ENCODE measurements at regions of chr7 and their contacts with region 1.

Region 1: DNA sequence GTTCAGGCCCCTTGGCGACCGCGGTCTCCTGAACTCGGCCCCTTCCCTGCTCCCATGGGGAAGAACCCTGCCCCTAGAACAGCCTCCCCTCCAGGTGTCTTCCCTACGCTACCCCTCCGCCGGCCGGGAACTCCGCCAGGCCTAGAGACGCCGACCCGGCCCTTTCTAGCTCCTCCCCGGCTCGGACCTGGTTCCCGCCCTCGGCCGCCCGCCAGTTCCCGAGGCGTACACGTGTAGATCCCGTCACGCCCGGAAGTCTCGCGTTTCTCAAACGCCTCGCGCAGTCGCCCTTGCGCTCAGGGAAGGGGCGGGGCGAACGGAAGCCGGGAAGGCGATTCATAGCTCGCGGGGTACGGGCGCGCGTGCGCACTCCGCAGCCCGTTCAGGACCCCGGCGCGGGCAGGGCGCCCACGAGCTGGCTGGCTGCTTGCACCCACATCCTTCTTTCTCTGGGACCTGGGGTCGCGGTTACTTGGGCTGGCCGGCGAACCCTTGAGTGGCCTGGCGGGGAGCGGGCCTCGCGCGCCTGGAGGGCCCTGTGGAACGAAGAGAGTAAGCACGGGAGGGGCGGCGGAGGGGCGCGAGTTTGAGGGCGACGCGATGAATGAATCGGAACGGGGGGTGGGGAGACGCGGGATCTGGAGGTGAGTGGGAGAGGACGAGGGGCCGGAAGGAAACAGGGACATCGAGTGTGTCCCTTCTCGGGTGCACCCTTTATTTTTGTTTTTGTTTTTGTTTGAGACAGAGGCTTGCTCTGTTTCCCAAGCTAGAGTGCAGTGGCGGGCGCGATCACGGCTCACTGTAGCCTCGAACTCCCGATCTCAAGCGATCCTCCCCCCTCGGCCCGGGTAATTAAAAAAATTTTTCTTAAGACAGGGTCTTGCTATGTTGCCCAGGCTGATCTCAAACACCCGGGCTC is at the start of gene POP7:
- DNase-seq: peak; percentile 91 to 99
- ATAC-seq: peak; percentile 95 to 96
- H3K4me3 ChIP-seq: peak within 1 kb of the TSS; percentile 76
- H3K27ac ChIP-seq: peak within 1 kb of the TSS; percentile 91 to 96
- H3K4me1 ChIP-seq: peaks cover 12% of the 10 kb centered on the region
- CTCF ChIP-seq: no peak
- EP300 ChIP-seq: no peak
- POLR2A ChIP-seq: peak; percentile 72
- RAD21 ChIP-seq: no peak
- polyA plus RNA-seq, gene POP7: 29.5 and 37.3 TPM in 2 replicates

Region 2: DNA sequence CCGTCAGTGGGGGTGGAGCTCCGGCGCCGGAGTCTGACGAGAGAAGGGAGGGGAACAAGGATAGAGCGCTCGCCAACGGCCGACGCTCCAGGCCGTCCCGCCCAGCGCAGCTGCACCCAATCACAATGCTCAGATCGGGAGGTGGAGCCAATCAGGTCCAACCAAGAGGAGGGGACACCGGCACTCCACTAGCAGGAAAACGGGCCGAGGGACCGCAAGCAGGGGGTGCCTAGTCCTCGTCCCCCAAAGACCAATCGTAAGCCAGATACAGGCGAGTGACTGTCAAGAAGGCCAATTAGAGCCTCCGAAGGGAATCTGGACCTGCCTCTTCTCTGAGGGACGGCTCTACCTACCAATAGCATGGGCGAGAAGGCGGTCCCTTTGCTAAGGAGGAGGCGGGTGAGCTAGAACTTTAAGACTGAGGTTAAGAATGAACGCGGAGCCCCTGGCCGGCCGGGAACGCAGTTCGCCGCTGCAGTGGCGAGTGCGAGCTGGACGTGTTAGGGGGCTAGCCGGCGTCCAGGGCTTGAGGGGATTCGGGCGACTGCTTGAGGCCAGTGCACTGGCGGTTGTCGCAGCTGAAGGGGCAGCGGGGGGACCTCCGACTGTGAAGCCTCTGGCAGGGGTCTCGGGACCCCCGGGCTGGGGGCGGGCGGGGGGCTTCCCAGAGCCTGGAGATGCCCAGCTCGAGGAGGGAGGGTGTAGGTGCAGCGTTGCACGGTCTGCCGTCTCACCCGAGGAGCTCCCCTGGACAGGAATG is 119.6 kb before region 1 on chr7 and contains the start of gene FBXO24:
- CTCF ChIA-PET with region 1: interaction called, 3 read pairs
- POLR2A ChIA-PET with region 1: interaction called, 10 read pairs
- DNase-seq: peak; percentile 100
- ATAC-seq: peak; percentile 88 to 95
- H3K4me3 ChIP-seq: peak within 1 kb of the TSS; percentile 99
- H3K27ac ChIP-seq: peak within 1 kb of the TSS; percentile 95 to 99
- H3K4me1 ChIP-seq: peaks cover 15% of the 10 kb centered on the region
- CTCF ChIP-seq: no peak
- EP300 ChIP-seq: no peak
- POLR2A ChIP-seq: peak; percentile 79
- RAD21 ChIP-seq: no peak
- polyA plus RNA-seq, gene FBXO24: 0.36 and 0.52 TPM in 2 replicates

Region 3: GRCh38 chr7:100632951-100633717 is 72.9 kb before region 1 on chr7:
- CTCF ChIA-PET with region 1: interaction called, 20 read pairs
- POLR2A ChIA-PET with region 1: interaction called, 15 read pairs
- DNase-seq: peak; percentile 79 to 90
- ATAC-seq: peak; percentile 88 to 93
- H3K4me3 ChIP-seq: peak overlapping the region; percentile 66
- H3K27ac ChIP-seq: peak overlapping the region; percentile 82 to 97
- H3K4me1 ChIP-seq: 0 out of 3 replicates have a peak, but pooled peaks cover 3% of the 10 kb centered on the region
- CTCF ChIP-seq: peak; percentile 43; the same call in 2 of the 3 replicates
- EP300 ChIP-seq: no peak
- POLR2A ChIP-seq: peak; percentile 62
- RAD21 ChIP-seq: peak; percentile 16 to 26; a peak in 1 of 5 replicates

Region 4: GRCh38 chr7:100719523-100720319 is 13.7 kb after region 1 on chr7:
- CTCF ChIA-PET with region 1: interaction called, 266 read pairs
- POLR2A ChIA-PET with region 1: interaction called, 6 read pairs
- DNase-seq: peak in 1 of 2 experiments; percentile 64
- ATAC-seq: peak; percentile 68 to 80
- H3K4me3 ChIP-seq: peak overlapping the region; percentile 40
- H3K27ac ChIP-seq: peak overlapping the region in 1 of 2 experiments; percentile 70; a peak in 1 of 6 replicates
- H3K4me1 ChIP-seq: peaks cover 11% of the 10 kb centered on the region; the same call in 2 of the 3 replicates
- CTCF ChIP-seq: peak; percentile 55
- EP300 ChIP-seq: no peak
- POLR2A ChIP-seq: no peak
- RAD21 ChIP-seq: peak; percentile 77 to 80

Region 5: GRCh38 chr7:100763556-100764140 is 57.6 kb after region 1 on chr7:
- CTCF ChIA-PET with region 1: interaction called, 10 read pairs
- POLR2A ChIA-PET with region 1: no interaction called
- DNase-seq: no peak
- ATAC-seq: no peak
- H3K4me3 ChIP-seq: no peak overlapping the region
- H3K27ac ChIP-seq: no peak overlapping the region
- H3K4me1 ChIP-seq: 0 out of 3 replicates have a peak, but pooled peaks cover 4% of the 10 kb centered on the region
- CTCF ChIP-seq: no peak
- EP300 ChIP-seq: no peak
- POLR2A ChIP-seq: no peak
- RAD21 ChIP-seq: no peak

Region 6: DNA sequence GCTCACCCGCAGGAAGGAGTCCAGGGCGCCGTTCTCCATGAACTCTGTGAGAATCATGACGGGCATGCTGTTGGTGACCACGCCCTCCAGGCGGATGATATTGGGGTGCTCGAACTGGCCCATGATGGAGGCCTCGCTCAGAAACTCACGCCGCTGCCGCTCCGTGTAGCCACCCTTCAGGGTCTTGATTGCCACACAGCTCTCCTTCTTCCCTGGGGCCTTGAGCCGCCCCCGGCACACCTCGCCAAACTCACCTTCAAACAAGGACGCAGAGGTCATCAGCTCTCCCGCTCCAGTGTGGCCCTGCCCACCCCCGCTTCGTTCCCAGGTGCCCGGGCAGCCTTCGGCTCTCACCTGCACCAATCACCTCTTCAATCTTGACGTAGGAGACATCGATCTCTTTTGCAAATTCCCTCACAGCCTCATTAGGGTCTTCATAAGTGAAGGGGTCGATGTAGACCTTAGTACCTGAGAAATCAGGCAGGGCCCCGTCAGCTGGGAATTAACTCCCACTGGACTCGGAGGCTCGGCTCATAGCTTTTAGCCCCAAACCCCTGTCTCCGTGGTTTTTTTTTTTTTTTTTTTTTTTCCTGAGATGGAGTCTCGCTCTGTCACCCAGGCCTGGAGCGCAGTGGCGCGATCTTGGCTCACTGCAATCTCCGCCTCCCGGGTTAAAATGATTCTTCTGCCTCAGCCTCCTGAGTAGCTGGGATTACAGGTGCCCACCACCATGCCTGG is 106.9 kb after region 1 on chr7:
- CTCF ChIA-PET with region 1: interaction called, 16 read pairs
- POLR2A ChIA-PET with region 1: no interaction called
- DNase-seq: no peak
- ATAC-seq: no peak
- H3K4me3 ChIP-seq: no peak overlapping the region
- H3K27ac ChIP-seq: peak overlapping the region in 1 of 2 experiments; percentile 21; a peak in 1 of 6 replicates
- H3K4me1 ChIP-seq: peaks cover 13% of the 10 kb centered on the region; the same call in 2 of the 3 replicates
- CTCF ChIP-seq: no peak
- EP300 ChIP-seq: no peak
- POLR2A ChIP-seq: no peak
- RAD21 ChIP-seq: no peak

Region 7: DNA sequence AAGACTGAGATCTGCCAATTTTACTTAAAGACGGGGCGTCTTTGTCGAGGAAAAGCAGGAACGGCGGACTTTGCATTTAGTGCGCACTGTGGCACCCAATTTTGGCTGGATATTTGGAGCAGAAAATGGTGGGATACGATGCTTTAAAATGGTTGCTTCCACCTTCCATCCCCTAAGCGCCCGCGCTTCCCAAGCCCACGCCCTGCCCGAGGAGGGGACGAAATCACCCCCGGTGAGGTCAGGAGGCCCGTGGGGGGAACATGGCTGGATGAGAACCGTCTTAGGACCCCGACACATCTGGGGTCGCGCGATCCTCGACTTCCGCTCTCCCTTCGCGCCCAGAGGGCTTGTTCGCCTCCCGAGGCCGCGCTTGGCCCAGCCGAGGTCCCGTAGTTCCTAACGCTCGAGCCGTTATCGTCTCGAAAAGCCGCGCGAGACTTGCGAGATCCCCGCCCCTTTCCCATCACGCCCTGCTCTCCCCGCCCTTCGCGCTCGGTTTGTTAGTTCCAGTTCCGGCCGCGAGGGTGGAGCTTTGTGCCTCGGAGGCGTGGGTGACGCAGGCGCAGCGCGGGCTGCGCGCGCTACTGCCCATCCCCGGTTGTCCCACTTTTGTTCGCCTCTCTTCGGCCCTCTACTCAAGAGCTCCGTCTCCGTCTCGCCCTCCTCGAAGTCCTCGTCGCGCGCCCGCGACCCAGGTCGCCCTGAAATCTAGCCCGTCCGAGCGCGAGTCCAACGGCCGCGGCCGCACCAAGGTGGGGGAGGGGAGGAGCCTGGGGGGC is 168.8 kb after region 1 on chr7 and contains the start of gene SRRT:
- CTCF ChIA-PET with region 1: interaction called, 9 read pairs
- POLR2A ChIA-PET with region 1: interaction called, 18 read pairs
- DNase-seq: peak; percentile 95 to 99
- ATAC-seq: peak; percentile 92 to 97
- H3K4me3 ChIP-seq: peak within 1 kb of the TSS; percentile 98
- H3K27ac ChIP-seq: peak within 1 kb of the TSS; percentile 95 to 96
- H3K4me1 ChIP-seq: peaks cover 9% of the 10 kb centered on the region
- CTCF ChIP-seq: no peak
- EP300 ChIP-seq: no peak
- POLR2A ChIP-seq: peak; percentile 82
- RAD21 ChIP-seq: no peak
- polyA plus RNA-seq, gene SRRT: 49.9 and 52.2 TPM in 2 replicates

Region 8: DNA sequence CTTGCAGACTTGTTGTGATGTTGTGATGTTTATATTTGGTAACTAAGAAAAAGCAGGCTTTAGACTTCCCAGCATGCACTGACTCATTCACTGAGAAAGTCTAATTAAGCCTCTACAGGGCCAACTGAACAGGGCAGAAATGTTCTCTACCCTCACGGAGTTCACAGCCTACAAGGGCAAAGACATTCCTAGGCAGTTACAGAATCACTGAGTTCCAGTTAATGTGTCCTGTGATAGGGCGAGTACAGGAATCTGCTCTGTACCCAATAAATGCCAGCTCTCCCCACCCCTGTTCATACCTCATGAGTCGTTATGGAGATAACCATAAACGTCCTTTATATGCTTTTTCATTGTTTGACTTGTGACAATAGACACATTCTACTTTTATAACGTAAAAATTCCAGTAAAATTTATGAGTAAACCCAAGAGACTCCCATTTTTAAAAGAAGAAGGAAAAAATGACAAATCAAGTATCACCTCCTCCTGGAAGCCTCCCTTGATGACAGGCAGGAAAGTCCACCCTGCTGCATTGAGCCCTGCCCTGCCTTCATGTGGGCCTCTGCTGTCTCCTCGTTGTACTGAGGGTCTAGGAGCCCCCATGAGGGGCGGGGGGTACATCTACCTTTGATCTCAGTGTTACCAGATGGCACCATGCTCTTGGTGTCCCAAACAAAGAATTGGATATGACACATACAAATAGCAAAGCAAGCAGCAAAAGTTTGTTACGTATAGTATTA is 277.6 kb after region 1 on chr7:
- CTCF ChIA-PET with region 1: no interaction called
- POLR2A ChIA-PET with region 1: no interaction called
- DNase-seq: peak in 1 of 2 experiments; percentile 91
- ATAC-seq: peak; percentile 94 to 95
- H3K4me3 ChIP-seq: no peak overlapping the region
- H3K27ac ChIP-seq: peak overlapping the region; percentile 59 to 61; a peak in 5 of 6 replicates
- H3K4me1 ChIP-seq: peaks cover 29% of the 10 kb centered on the region
- CTCF ChIP-seq: no peak
- EP300 ChIP-seq: 0 out of 5 replicates have a peak, but pooled peaks of 1 of the 2 experiments have one; percentile 33
- POLR2A ChIP-seq: no peak
- RAD21 ChIP-seq: no peak